GM12878 (cell line): ENCODE measurements at regions of chr5 and their contacts with region 1.

Region 1: DNA sequence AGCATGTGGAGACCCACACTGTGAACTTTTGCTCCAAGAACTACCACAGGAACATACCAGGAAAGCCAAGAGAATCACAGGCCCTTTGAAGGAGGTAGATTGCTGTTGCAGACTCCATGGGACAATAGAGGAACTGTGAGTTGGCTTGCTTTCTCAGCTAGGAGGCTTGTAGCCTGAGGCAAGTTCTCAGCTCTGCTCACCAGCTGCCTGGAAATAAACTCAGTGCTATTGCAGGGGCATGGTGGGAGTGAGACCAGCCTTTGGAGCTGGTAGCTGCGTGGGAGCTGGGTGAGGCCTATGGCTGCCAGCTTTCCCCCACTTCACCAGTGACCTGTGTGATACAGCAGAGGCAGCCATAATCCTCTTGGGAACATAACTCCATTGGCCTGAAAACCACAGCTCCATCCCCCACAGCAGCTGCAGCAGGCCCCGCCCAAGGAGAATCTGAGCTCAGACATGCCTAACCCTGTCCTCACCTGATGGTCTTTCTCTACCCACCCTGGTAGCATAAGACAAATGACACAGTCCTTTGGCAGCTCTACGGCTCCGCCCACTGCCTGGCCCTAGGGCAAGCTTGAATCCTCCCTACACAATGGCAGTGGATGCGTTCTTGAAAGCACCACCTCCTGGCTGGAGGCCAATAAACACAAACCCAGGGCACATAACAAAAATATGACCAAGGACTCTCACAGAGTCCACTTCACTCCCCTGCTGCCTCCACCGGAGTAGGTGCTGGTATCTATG is 389.5 kb downstream of the KIF4B start:
- DNase-seq: no peak
- ATAC-seq: no peak
- H3K4me3 ChIP-seq: no peak overlapping the region
- H3K27ac ChIP-seq: no peak overlapping the region
- H3K4me1 ChIP-seq: no peaks in the 10 kb centered on the region
- H3K27me3 ChIP-seq: no peaks in the 10 kb centered on the region
- CTCF ChIP-seq: no peak
- EP300 ChIP-seq: no peak
- POLR2A ChIP-seq: no peak
- RAD21 ChIP-seq: no peak

Region 2: DNA sequence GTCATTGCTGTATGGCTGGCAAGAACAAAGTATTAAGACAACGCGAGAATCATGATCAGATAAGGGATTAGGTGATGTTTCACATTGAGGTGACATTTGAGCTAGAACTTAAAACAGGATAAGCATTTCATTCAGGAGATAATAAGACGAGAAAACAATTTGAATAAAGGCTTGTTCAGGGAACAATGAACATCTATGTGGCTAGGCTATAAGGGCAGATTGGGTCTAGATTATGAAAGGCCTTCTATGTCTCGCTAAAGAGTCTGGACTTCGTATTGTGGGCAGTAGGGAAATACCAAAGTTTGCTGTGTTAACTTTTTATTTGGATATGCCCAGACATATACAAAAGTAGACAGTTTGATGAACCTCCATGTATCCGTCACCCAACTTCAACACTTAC is 455.3 kb before region 1 on chr5:
- CTCF ChIA-PET with region 1: no interaction called
- POLR2A ChIA-PET with region 1: no interaction called
- RAD21 ChIA-PET with region 1: no interaction called
- SMC1A ChIA-PET with region 1: no interaction called
- in situ Hi-C with region 1: no loop called
- intact Hi-C with region 1: no loop called
- DNase-seq: no peak
- ATAC-seq: no peak
- H3K4me3 ChIP-seq: no peak overlapping the region
- H3K27ac ChIP-seq: no peak overlapping the region
- H3K4me1 ChIP-seq: no peaks in the 10 kb centered on the region; the same call in 1 of the 2 replicates
- H3K27me3 ChIP-seq: no peaks in the 10 kb centered on the region
- CTCF ChIP-seq: no peak
- EP300 ChIP-seq: no peak
- POLR2A ChIP-seq: no peak
- RAD21 ChIP-seq: no peak

Region 3: DNA sequence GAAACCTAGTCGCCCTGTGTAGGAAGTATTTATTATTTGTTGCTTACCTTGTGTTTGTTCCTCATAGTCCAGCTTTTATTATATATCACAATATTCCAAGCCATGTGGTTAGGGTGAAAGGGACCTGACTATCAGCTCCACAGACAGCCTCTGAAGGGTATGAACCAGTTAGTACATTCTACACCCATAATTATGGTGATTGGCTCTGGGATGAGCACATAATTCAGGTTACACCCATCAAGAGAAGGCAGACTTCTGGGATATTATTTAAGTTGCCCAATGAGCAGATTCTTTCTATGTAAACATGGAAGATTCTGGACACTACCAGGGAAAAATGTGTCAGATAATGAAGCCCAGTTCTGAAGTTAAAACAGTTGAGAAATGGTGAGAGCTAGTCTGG is 221.6 kb before region 1 on chr5:
- CTCF ChIA-PET with region 1: no interaction called
- POLR2A ChIA-PET with region 1: no interaction called
- RAD21 ChIA-PET with region 1: no interaction called
- SMC1A ChIA-PET with region 1: no interaction called
- in situ Hi-C with region 1: no loop called
- intact Hi-C with region 1: loop called (anchors 5 kb)
- DNase-seq: no peak
- ATAC-seq: no peak
- H3K4me3 ChIP-seq: no peak overlapping the region
- H3K27ac ChIP-seq: no peak overlapping the region
- H3K4me1 ChIP-seq: no peaks in the 10 kb centered on the region
- H3K27me3 ChIP-seq: no peaks in the 10 kb centered on the region
- CTCF ChIP-seq: no peak
- EP300 ChIP-seq: no peak
- POLR2A ChIP-seq: no peak
- RAD21 ChIP-seq: no peak